ENCODE measurements at regions of chr4 and their contacts with region 1.

Region 1: DNA sequence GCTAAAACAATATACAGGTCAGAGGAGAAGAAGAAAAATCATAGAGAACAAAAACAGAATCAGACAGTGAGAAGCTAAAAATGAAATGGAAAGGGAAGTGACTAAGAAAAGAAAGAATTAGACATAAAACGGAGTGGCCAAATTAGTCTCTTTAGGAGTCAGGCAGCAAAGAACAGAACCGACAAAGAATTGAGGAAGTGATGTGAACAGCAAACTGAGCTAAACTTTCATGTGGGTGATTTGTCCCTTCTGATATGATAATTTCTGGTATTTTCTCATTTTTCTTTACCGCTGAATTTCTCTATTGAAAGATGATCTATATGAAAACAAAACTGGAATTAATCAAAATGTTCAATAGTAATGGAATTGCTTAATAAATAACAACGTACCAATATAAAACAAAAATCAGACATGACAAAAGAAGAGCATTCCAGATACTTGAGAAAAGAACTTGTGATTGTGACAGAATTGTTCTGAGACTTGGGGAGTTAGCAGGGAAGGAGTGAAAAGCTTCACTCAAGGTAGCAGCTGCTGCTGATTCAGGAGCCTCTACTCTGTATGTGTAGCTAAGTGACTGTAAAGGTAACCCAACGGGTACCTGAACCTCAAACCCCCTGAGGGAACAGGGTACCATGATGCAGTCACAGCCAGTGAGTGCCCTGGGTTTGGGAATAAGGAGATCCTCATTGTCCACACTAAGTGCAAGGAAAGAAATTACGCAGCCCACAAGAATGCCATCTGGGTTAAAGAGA is 8.8 kb downstream of the TAPT1 start:
- DNase-seq: peak; percentile 10
- H3K4me3 Mint-ChIP-seq: peak overlapping the region; percentile 13
- H3K27ac Mint-ChIP-seq: peak overlapping the region; percentile 74
- H3K4me1 Mint-ChIP-seq: peaks cover 75% of the 10 kb centered on the region
- H3K27me3 Mint-ChIP-seq: no peaks in the 10 kb centered on the region

Region 2: DNA sequence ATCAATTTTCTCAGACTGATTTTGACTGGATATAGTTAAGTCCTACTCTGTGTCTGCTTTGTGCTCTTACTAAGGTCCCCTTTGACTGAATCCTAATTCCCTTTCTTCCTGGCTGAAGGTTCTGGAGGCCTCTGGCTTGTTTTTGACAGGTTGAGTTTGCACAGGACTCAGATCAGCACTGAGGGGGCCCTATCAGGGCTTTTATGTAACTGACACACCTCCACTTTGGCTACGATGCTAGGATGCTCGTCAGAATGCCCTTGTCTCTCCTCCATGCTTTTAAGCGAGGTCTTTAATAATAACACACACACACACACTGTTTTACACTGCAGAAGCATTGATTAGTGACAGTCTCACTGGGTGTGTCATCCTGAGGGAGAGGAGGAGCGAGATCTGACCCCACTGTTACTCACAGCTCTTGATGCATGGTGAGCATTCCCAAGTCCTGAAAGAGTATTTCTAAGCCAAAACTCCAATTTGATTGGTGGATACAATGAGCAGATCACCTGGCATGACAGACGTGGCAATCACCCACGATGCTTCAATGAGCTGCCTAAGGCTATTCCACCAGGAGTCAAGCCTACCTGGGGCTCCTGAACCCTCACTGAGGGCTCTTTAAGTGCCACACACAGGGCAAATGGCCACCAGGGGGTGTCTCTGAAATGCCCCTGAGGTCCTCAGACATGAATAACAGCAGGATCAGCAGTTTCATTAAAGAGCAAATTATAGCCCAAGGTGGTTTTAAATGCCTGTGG is 1345.6 kb before region 1 on chr4:
- CTCF ChIA-PET with region 1: no interaction called
- intact Hi-C with region 1: no loop called
- DNase-seq: peak; percentile 38
- H3K4me3 Mint-ChIP-seq: no peak overlapping the region
- H3K27ac Mint-ChIP-seq: no peak overlapping the region
- H3K4me1 Mint-ChIP-seq: peaks cover 8% of the 10 kb centered on the region
- H3K27me3 Mint-ChIP-seq: no peaks in the 10 kb centered on the region

Region 3: GRCh38 chr4:16205298-16206164 is 11.9 kb before region 1 on chr4:
- CTCF ChIA-PET with region 1: interaction called, 34 read pairs
- intact Hi-C with region 1: no loop called
- DNase-seq: no peak
- H3K4me3 Mint-ChIP-seq: no peak overlapping the region
- H3K27ac Mint-ChIP-seq: no peak overlapping the region
- H3K4me1 Mint-ChIP-seq: peaks cover 39% of the 10 kb centered on the region
- H3K27me3 Mint-ChIP-seq: no peaks in the 10 kb centered on the region

Measured in activated naive CD4-positive, alpha-beta T cell treated with anti-CD3 and anti-CD28 coated beads for 36 hours (primary cell).